A549 (cell line): ENCODE measurements at regions of chr14 and their contacts with region 1.

Region 1: DNA sequence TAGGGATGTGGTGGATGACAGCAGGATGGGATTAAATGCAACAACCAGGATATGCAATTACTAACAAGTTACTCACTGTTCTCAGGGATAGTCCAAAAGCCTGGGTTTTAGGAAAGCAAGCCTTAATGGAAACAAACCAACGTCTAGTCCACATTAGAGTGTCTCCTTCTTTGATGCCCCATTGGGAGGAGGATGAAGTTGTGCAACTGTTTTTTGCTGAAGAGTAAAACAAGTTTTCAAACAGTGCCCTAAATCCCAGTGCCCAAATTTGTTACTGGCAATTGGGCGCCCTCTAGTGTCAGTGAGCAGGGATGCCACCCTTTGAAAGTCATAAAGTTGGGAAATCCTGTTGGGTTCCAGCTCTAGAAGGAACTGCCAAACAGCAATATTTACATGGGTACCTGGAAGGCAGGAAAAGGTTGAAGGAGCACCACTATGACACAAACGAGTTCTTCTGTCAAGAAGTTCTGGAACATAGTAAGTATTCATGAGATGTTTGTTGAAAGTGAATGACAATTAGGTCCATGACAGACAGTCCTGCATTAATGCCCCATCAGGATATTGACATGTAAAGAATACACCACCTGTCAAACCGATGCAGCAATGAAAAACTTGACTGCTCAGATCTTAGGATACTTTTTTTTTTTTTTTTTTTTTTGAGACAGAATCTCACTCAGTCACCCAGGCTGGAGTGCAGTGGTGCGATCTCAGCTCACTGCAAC is 11.1 kb upstream of the DPF3 start:
- DNase-seq: peak; percentile 69 to 73
- ATAC-seq: peak; percentile 67 to 86
- H3K4me3 ChIP-seq: no peak overlapping the region
- H3K27ac ChIP-seq: no peak overlapping the region
- H3K4me1 ChIP-seq: peaks cover 15% of the 10 kb centered on the region; the same call in 1 of the 3 replicates
- CTCF ChIP-seq: peak; percentile 96
- EP300 ChIP-seq: no peak
- POLR2A ChIP-seq: no peak
- RAD21 ChIP-seq: peak; percentile 95 to 97

Region 2: DNA sequence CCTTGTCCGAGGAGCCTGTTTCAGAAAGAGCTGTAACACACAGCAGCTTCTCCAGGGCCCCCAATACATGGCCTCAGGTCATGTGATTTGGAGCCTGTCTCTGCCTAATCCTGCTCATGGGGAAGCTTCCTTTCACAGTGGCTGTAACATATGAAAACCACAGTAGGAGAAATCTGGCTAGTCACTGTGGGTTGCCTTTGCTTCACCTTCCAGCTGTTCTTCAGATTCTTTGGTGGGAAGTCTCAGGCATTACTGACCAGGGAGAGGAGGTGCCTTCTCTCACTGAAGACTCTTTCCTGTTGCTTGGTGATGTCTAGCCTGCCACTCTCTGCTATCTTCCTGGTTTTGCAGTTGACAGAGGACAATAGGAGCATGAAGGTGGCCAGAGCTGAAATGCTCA is 361.7 kb before region 1 on chr14:
- CTCF ChIA-PET with region 1: interaction called, 12 read pairs
- POLR2A ChIA-PET with region 1: no interaction called
- DNase-seq: no peak
- ATAC-seq: no peak
- H3K4me3 ChIP-seq: no peak overlapping the region
- H3K27ac ChIP-seq: no peak overlapping the region
- H3K4me1 ChIP-seq: no peaks in the 10 kb centered on the region
- CTCF ChIP-seq: no peak
- EP300 ChIP-seq: no peak
- POLR2A ChIP-seq: no peak
- RAD21 ChIP-seq: no peak

Region 3: DNA sequence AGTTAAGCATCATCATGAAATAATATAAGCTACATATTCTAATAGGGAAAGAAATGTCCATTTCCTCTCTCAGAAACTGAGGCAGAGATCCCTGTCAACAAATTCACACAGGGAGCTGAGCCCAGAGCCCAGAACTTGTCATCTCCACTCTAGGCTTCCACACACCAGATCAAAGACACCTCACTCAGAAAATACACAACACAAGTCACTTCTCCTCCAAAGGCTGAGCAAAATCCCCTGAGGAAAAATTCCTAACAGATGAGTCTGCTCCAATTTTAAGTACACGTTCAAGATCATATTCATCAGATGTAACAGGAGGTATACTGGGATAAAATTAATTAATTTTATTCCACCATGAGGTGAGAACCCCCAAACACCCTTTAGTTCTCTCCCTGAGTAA is 238.4 kb before region 1 on chr14:
- CTCF ChIA-PET with region 1: no interaction called
- POLR2A ChIA-PET with region 1: no interaction called
- DNase-seq: peak; percentile 14 to 36
- ATAC-seq: 0 out of 6 replicates have a peak, but pooled peaks of 1 of the 2 experiments have one; percentile 20
- H3K4me3 ChIP-seq: no peak overlapping the region
- H3K27ac ChIP-seq: no peak overlapping the region
- H3K4me1 ChIP-seq: peaks cover 29% of the 10 kb centered on the region
- CTCF ChIP-seq: no peak
- EP300 ChIP-seq: no peak
- POLR2A ChIP-seq: no peak
- RAD21 ChIP-seq: no peak

Region 4: DNA sequence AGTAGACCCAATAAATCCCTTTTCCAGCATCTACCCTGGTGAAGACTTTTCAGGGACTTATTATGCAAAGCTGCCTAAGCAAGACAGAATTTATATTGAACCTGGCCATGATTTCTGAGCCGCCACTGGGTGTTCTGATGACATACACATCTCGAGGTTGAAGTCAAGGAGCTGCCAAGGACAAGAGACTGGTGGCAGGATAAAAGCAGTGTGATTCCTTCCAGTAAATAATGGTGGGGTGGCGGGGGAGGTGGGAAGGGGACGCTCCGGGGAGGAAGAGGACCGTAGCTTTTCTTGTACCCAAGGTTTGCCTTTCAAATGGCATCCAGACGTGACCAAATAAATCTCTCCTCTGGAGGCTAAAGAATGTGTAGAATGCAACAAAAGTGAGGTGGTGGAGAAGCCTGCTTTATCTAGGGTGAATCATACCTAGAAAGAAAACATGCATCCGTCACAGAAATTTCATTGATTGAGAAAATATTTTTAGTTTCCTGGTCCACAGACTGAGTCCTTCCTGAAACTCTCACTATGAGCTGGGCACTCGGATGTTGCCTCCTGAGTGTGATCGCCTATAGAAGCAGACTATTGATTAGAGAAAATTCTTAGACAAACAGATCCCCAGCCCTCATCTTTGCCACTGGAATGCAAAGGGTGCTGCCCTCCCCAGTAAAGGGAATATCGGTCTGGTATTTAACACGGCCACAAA is 123.4 kb before region 1 on chr14:
- CTCF ChIA-PET with region 1: no interaction called
- POLR2A ChIA-PET with region 1: no interaction called
- DNase-seq: peak; percentile 24 to 51
- ATAC-seq: peak; percentile 76 to 85
- H3K4me3 ChIP-seq: no peak overlapping the region
- H3K27ac ChIP-seq: peak overlapping the region; percentile 38 to 56; a peak in 5 of 6 replicates
- H3K4me1 ChIP-seq: peaks cover 16% of the 10 kb centered on the region
- CTCF ChIP-seq: no peak
- EP300 ChIP-seq: no peak
- POLR2A ChIP-seq: no peak
- RAD21 ChIP-seq: no peak

Region 5: GRCh38 chr14:72855913-72856312 is 49.1 kb before region 1 on chr14:
- CTCF ChIA-PET with region 1: no interaction called
- POLR2A ChIA-PET with region 1: no interaction called
- DNase-seq: no peak
- ATAC-seq: no peak
- H3K4me3 ChIP-seq: no peak overlapping the region
- H3K27ac ChIP-seq: no peak overlapping the region
- H3K4me1 ChIP-seq: no peaks in the 10 kb centered on the region
- CTCF ChIP-seq: no peak
- EP300 ChIP-seq: no peak
- POLR2A ChIP-seq: no peak
- RAD21 ChIP-seq: no peak

Region 6: DNA sequence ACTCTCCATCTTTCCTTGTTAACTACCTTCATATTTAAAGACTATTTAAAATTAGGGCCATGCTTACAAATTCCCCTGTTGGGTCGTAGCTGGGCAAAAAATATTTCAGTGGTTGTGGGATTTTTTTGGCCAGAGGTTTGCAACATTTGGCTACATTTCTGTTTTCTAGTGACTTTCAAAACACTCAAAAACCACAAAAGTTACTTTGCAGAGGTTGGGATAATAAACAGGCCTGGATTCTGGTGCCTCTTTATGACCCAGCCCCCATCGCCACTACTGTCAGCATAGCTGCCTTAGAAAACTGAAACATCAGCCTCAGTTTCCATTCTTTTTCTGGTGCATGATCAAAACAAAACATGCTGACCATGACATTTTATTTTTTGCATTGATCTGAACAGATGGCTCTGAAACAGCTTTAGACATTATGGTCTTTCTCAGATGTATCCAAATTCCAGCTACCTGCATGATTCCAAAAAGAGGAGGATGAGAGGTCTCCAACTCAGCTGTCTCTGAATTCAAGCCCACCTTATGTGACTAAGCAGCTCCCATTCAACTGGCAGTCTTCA is 16.3 kb before region 1 on chr14:
- CTCF ChIA-PET with region 1: interaction called, 36 read pairs
- POLR2A ChIA-PET with region 1: no interaction called
- DNase-seq: no peak
- ATAC-seq: no peak
- H3K4me3 ChIP-seq: no peak overlapping the region
- H3K27ac ChIP-seq: no peak overlapping the region
- H3K4me1 ChIP-seq: peaks cover 8% of the 10 kb centered on the region; the same call in 2 of the 3 replicates
- CTCF ChIP-seq: no peak
- EP300 ChIP-seq: no peak
- POLR2A ChIP-seq: no peak
- RAD21 ChIP-seq: no peak

Region 7: DNA sequence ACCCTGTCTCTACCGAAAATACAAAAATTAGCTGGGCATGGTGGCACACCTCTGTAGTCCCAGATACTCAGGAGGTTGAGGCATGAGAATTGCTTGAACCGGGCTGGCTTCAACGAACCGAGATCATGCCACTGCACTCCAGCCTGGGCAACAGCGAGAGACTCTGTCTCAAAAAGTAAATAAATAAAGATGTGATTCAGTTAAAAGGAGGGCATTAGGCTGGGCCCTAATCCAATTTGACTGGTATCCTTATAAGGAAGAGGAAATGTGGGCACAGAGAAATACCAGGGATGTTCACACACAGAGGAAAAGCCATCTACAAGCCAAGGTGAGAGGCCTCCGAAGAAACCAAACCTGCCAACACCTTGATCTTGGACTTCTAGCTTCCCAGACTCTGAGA is 11.2 kb after region 1 on chr14:
- CTCF ChIA-PET with region 1: interaction called, 24 read pairs
- POLR2A ChIA-PET with region 1: interaction called, 6 read pairs
- DNase-seq: peak in 1 of 2 experiments; percentile 25
- ATAC-seq: peak in 1 of 2 experiments; percentile 65; a peak in 3 of 6 replicates
- H3K4me3 ChIP-seq: no peak overlapping the region
- H3K27ac ChIP-seq: no peak overlapping the region
- H3K4me1 ChIP-seq: peaks cover 8% of the 10 kb centered on the region; the same call in 1 of the 3 replicates
- CTCF ChIP-seq: no peak
- EP300 ChIP-seq: no peak
- POLR2A ChIP-seq: no peak
- RAD21 ChIP-seq: no peak

Region 8: GRCh38 chr14:72942782-72943333 is 37.9 kb after region 1 on chr14:
- CTCF ChIA-PET with region 1: interaction called, 20 read pairs
- POLR2A ChIA-PET with region 1: interaction called, 4 read pairs
- DNase-seq: no peak
- ATAC-seq: no peak
- H3K4me3 ChIP-seq: no peak overlapping the region
- H3K27ac ChIP-seq: no peak overlapping the region
- H3K4me1 ChIP-seq: no peaks in the 10 kb centered on the region
- CTCF ChIP-seq: no peak
- EP300 ChIP-seq: no peak
- POLR2A ChIP-seq: no peak
- RAD21 ChIP-seq: peak in 1 of 2 experiments; percentile 38; a peak in 2 of 5 replicates

Region 9: GRCh38 chr14:73026845-73027542 is 122.0 kb after region 1 on chr14 and contains the start of gene ZFYVE1:
- CTCF ChIA-PET with region 1: no interaction called
- POLR2A ChIA-PET with region 1: no interaction called
- DNase-seq: peak; percentile 98
- ATAC-seq: peak; percentile 99 to 100
- H3K4me3 ChIP-seq: peak within 1 kb of the TSS; percentile 65
- H3K27ac ChIP-seq: peak within 1 kb of the TSS; percentile 66 to 89
- H3K4me1 ChIP-seq: peaks cover 10% of the 10 kb centered on the region; the same call in 2 of the 3 replicates
- CTCF ChIP-seq: no peak
- EP300 ChIP-seq: no peak
- POLR2A ChIP-seq: peak; percentile 61
- RAD21 ChIP-seq: no peak
- polyA plus RNA-seq, gene ZFYVE1: 9.3 and 9.4 TPM in 2 replicates